GM23248 (cell line): ENCODE measurements at regions of chr18 and their contacts with region 1.

Region 1: GRCh38 chr18:48675352-48675761 is 136.5 kb downstream of the CTIF start:
- DNase-seq: peak; percentile 92
- H3K4me3 ChIP-seq: no peak overlapping the region
- H3K27ac ChIP-seq: peak overlapping the region; percentile 58
- H3K4me1 ChIP-seq: peaks cover 30% of the 10 kb centered on the region
- H3K27me3 ChIP-seq: no peaks in the 10 kb centered on the region

Region 2: GRCh38 chr18:49055754-49056172 is 380.4 kb after region 1 on chr18:
- in situ Hi-C with region 1: loop called (anchors 25 kb)
- DNase-seq: peak; percentile 88
- H3K4me3 ChIP-seq: no peak overlapping the region
- H3K27ac ChIP-seq: peak overlapping the region; percentile 72
- H3K4me1 ChIP-seq: peaks cover 41% of the 10 kb centered on the region
- H3K27me3 ChIP-seq: no peaks in the 10 kb centered on the region

Region 3: DNA sequence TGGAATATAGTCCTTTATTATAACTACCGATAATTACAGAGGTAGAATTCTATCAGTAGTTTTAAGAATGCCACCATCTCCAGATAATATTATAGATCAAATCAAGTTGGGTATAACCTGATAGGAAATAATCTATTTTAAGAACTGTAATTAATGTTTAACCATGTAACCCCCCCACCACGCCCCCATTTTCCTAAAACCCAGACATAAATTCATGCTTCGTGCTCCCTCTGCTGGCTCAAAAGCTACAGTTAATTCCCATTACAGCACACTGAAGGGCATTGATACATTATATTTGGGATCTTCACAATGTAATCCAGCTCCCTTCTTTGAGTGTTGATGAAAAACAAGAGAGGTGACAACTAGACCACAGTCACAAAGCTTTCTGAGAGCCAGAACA is 503.4 kb after region 1 on chr18:
- in situ Hi-C with region 1: loop called (anchors 10 kb)
- DNase-seq: peak; percentile 58
- H3K4me3 ChIP-seq: no peak overlapping the region
- H3K27ac ChIP-seq: 0 out of 2 replicates have a peak overlapping the region, but pooled peaks have one; percentile 52
- H3K4me1 ChIP-seq: peaks cover 40% of the 10 kb centered on the region
- H3K27me3 ChIP-seq: no peaks in the 10 kb centered on the region

Region 4: GRCh38 chr18:49447810-49448745 is 772.7 kb after region 1 on chr18:
- in situ Hi-C with region 1: loop called (anchors 25 kb)
- DNase-seq: peak; percentile 75
- H3K4me3 ChIP-seq: no peak overlapping the region
- H3K27ac ChIP-seq: no peak overlapping the region
- H3K4me1 ChIP-seq: peaks cover 9% of the 10 kb centered on the region
- H3K27me3 ChIP-seq: no peaks in the 10 kb centered on the region